Heart right ventricle (tissue), 16 donors: ENCODE measurements at regions of chr1 and their contacts with region 1.

Region 1: GRCh38 chr1:156129706-156130581 is 15.4 kb downstream of the LMNA start:
- DNase-seq: peak; percentile 82 to 86
- ATAC-seq: peak; percentile 50 to 73 (median 58)
- H3K4me3 ChIP-seq: peak overlapping the region in 8 of 10 donors; percentile 6 to 33 (median 27)
- H3K27ac ChIP-seq: peak overlapping the region; percentile 92 to 100 (median 98)
- H3K4me1 ChIP-seq: peaks cover 47 to 86% (median 60%) of the 10 kb centered on the region in 9 donors
- H3K27me3 ChIP-seq: no peaks in the 10 kb centered on the region
- CTCF ChIP-seq: peak; percentile 93 to 100 (median 98)

Region 2: GRCh38 chr1:155809088-155809487 is 320.9 kb before region 1 on chr1:
- intact Hi-C with region 1: no loop called
- DNase-seq: no peak
- ATAC-seq: no peak
- H3K4me3 ChIP-seq: no peak overlapping the region
- H3K27ac ChIP-seq: no peak overlapping the region
- H3K4me1 ChIP-seq: no peaks in the 10 kb centered on the region
- H3K27me3 ChIP-seq: no peaks in the 10 kb centered on the region
- CTCF ChIP-seq: no peak

Region 3: DNA sequence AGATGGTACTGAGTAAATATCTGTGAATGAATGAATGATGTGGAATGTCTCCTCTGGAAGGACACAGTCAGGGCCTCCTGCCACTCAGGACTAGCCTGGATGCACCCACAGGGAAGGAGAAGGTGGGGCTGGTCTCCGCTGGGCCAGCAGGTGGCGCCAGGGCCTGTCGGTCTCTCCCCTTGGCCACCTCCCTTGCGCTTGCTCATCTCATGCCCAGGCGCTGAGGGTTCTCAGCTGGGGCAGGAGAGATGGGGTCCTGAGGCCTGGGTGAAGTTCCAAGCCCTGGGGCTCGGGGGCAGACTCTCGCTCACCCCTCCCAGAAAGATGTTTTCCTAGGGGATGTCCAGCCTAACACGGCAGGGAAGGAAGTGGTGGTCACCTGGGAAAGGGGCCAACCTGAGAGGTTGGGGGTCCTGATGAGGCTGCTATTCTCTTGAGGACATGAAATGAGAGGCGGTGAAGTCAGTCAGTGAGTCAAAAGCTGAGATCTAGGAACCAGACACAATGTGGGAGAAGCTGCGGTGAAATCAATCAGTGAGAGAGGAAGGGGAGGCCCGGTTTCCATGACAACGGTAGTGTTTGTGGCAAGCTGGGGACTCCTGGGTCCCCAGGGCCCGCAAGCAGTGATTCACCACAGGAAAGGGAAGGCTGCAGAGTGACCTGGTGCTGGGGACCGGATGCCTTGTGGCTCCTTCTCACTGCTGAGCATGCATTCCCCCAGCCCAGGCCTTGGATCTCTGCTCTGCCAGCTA is 33.1 kb before region 1 on chr1:
- intact Hi-C with region 1: loop called (anchors 1 to 5 kb)
- DNase-seq: peak; percentile 92 to 93
- ATAC-seq: peak; percentile 93 to 98 (median 96)
- H3K4me3 ChIP-seq: peak overlapping the region in 3 of 10 donors; percentile 13 to 19 (median 19)
- H3K27ac ChIP-seq: peak overlapping the region; percentile 62 to 93 (median 85)
- H3K4me1 ChIP-seq: peaks cover 18 to 44% (median 34%) of the 10 kb centered on the region in 9 donors
- H3K27me3 ChIP-seq: no peaks in the 10 kb centered on the region
- CTCF ChIP-seq: peak; percentile 89 to 99 (median 98)

Region 4: DNA sequence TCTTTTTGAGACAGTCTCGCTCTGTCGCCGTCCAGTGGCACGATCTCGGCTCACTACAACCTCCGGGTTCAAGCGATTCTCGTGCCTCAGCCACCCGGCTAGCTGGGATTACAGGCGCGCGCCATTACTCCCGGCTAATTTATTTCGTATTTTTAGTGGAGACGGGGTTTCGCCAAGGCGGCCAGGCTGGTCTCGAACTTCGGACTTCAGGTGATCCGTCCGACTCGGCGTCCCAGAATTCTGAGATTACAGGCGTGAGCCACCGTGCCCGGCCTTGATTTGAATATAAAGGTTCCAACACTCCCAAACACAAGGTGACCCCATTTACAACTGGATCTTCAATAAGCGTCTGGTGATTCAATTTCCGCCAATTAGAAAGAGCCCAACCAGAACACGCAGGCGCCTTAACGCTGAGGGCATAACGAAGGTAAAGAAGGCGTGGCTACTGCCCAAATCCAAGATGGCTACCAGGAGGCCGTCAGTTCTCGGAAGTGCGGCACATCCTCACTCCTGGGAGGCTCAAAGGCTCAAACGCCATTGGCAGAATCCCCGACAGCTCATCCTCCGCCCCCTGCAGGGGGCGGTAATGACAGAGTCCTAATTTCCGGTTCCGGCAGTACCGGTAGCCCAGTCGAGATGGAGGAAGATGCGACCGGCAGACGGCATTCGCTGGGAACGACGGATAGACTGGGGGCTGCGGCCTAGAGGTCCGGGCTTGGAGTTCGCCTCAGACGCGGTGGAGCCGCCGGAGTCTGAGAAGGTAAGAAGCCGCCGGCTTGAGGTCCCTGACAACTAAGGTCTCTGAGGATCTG is 63.8 kb after region 1 on chr1 and contains the start of gene SLC25A44:
- intact Hi-C with region 1: no loop called
- DNase-seq: peak; percentile 93 to 97
- ATAC-seq: peak; percentile 98 to 100 (median 100)
- H3K4me3 ChIP-seq: peak within 1 kb of the TSS; percentile 69 to 98 (median 89)
- H3K27ac ChIP-seq: peak within 1 kb of the TSS; percentile 62 to 93 (median 86)
- H3K4me1 ChIP-seq: peaks cover 0 to 47% (median 40%) of the 10 kb centered on the region in 9 donors
- H3K27me3 ChIP-seq: no peaks in the 10 kb centered on the region
- CTCF ChIP-seq: peak; percentile 22 to 80 (median 72)
- total RNA-seq, gene SLC25A44: 15.4 to 26.0 (median 20.1) TPM

Region 5: GRCh38 chr1:156212833-156213643 is 83.1 kb after region 1 on chr1 and contains the start of gene PMF1:
- intact Hi-C with region 1: no loop called
- DNase-seq: peak; percentile 96 to 98
- ATAC-seq: peak; percentile 97 to 99 (median 99)
- H3K4me3 ChIP-seq: peak within 1 kb of the TSS; percentile 51 to 84 (median 66)
- H3K27ac ChIP-seq: peak within 1 kb of the TSS; percentile 85 to 99 (median 96)
- H3K4me1 ChIP-seq: peaks cover 3 to 44% (median 27%) of the 10 kb centered on the region in 9 donors
- H3K27me3 ChIP-seq: no peaks in the 10 kb centered on the region
- CTCF ChIP-seq: no peak
- total RNA-seq, gene PMF1: 55.9 to 87.3 (median 66.4) TPM

Region 6: DNA sequence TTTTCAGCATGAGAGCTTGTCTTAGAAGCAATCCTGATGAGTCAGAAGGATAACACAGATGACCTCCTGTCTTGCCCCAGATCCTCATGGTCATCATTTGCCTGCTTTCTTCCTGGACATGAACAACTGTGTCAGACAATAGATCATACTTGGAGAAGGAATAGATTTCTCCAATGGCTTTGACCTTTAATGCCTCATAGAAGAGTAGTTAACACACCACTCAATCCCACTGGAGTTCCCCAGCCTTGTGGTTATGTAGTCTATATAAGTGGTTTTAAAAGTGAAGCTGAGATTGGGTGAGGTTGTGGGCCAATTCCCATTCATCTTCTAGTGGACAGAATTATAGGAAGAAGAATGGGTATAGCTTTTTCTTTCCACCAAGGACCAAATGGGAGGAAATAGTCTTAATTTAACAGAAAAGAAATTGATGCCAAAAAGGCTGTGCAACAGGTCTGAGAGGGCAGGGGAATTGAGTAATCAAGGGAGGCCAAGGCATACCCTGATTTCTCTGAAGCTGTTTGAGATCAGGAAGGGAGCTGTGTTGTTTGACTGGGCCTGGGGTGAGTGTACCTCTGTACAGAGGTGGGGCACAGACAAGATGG is 651.7 kb after region 1 on chr1:
- intact Hi-C with region 1: no loop called
- DNase-seq: no peak
- ATAC-seq: peak in 1 of 8 donors; percentile 61
- H3K4me3 ChIP-seq: no peak overlapping the region
- H3K27ac ChIP-seq: no peak overlapping the region
- H3K4me1 ChIP-seq: peaks cover 2 to 56% (median 25%) of the 10 kb centered on the region in 9 donors
- H3K27me3 ChIP-seq: no peaks in the 10 kb centered on the region
- CTCF ChIP-seq: no peak